ENCODE measurements at regions of chr4 and their contacts with region 1.

Region 1: DNA sequence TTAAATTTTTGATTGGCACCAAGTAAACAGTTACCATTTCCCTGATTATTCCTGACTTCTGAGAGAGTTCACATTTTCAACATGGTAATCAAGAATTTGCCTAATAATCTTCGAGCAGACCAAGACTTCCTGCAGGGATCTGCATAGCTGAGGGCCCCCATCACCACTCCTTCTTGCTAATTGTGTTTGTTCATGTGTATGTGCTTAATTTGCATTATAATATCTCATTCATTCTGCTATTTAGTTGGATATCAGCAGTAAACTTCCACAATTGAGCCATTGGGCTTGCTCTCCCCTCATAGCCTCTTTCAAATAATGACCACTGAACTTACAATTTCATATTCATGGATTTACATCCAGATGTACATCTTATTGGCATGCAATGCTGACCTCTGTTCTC is 292.5 kb downstream of the SPATA18 start:
- DNase-seq: no peak
- ATAC-seq: no peak
- H3K4me3 ChIP-seq: no peak overlapping the region
- H3K4me3 Mint-ChIP-seq: no peak overlapping the region
- H3K27ac ChIP-seq: no peak overlapping the region
- H3K27ac Mint-ChIP-seq: no peak overlapping the region
- H3K4me1 ChIP-seq: no peaks in the 10 kb centered on the region
- H3K4me1 Mint-ChIP-seq: no peaks in the 10 kb centered on the region
- H3K27me3 ChIP-seq: no peaks in the 10 kb centered on the region
- H3K27me3 Mint-ChIP-seq: peaks cover 14% of the 10 kb centered on the region
- CTCF ChIP-seq: no peak

Region 2: GRCh38 chr4:52076731-52077130 is 266.9 kb before region 1 on chr4:
- CTCF ChIA-PET with region 1: no interaction called
- POLR2A ChIA-PET with region 1: no interaction called
- intact Hi-C with region 1: no loop called
- DNase-seq: no peak
- ATAC-seq: no peak
- H3K4me3 ChIP-seq: no peak overlapping the region
- H3K4me3 Mint-ChIP-seq: no peak overlapping the region
- H3K27ac ChIP-seq: no peak overlapping the region
- H3K27ac Mint-ChIP-seq: no peak overlapping the region
- H3K4me1 ChIP-seq: no peaks in the 10 kb centered on the region
- H3K4me1 Mint-ChIP-seq: no peaks in the 10 kb centered on the region
- H3K27me3 ChIP-seq: peaks cover 10 to 29% of the 10 kb centered on the region in 2 experiments
- H3K27me3 Mint-ChIP-seq: peaks cover 66% of the 10 kb centered on the region
- CTCF ChIP-seq: no peak

Region 3: GRCh38 chr4:52358883-52359321 is 15.3 kb after region 1 on chr4:
- CTCF ChIA-PET with region 1: no interaction called
- POLR2A ChIA-PET with region 1: no interaction called
- intact Hi-C with region 1: loop called in 1 of 2 experiments (anchors 2 kb)
- DNase-seq: no peak
- ATAC-seq: no peak
- H3K4me3 ChIP-seq: no peak overlapping the region
- H3K4me3 Mint-ChIP-seq: no peak overlapping the region
- H3K27ac ChIP-seq: no peak overlapping the region
- H3K27ac Mint-ChIP-seq: no peak overlapping the region
- H3K4me1 ChIP-seq: no peaks in the 10 kb centered on the region
- H3K4me1 Mint-ChIP-seq: no peaks in the 10 kb centered on the region
- H3K27me3 ChIP-seq: no peaks in the 10 kb centered on the region
- H3K27me3 Mint-ChIP-seq: no peaks in the 10 kb centered on the region
- CTCF ChIP-seq: no peak

Measured in CD4-positive, alpha-beta T cell (primary cell).